ENCODE measurements at regions of chr5 and their contacts with region 1.

Region 1: GRCh38 chr5:42767491-42768105 is 11.0 kb downstream of the CCDC152 start:
- DNase-seq: peak in 3 of 4 experiments; percentile 13 to 51 (median 26)
- ATAC-seq: peak; percentile 81
- H3K4me3 ChIP-seq: no peak overlapping the region
- H3K27ac ChIP-seq: no peak overlapping the region
- H3K4me1 ChIP-seq: no peaks in the 10 kb centered on the region
- H3K27me3 ChIP-seq: no peaks in the 10 kb centered on the region
- CTCF ChIP-seq: peak; percentile 40 to 79 (median 46); a peak in 3 of 6 replicates
- EP300 ChIP-seq: no peak
- POLR2A ChIP-seq: no peak
- RAD21 ChIP-seq: peak; percentile 90 to 91

Region 2: DNA sequence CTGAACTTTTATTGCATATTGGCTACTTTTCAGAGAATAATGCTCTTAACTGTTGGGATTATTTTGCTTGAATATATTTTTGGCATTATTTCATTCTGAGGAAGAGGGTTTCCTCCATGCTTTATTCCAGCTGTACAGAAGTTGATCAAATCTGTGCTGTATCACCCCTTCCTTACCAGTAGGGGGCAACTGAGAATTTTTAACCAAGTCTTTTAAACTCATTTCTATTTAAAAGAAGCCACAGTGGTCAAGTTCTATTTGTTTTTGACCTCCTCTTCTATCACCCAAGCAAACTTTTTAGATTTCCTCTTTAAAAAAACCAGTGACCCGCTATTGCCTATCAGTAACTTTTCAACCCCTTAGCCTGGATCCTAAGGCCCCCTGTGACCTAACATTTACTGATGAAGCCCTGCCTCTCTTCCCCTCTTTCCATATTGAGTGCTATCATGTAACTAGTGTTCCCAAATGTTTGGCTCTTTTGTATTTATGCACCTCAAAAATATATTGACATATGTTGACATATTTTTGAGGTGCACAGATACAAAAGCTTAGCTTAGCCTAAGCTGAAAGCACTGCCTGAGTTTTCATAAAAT is 761.9 kb before region 1 on chr5:
- CTCF ChIA-PET with region 1: interaction called, 3 read pairs
- POLR2A ChIA-PET with region 1: no interaction called
- in situ Hi-C with region 1: no loop called
- intact Hi-C with region 1: loop called (anchors 5 kb)
- DNase-seq: peak; percentile 20 to 53 (median 47)
- ATAC-seq: peak; percentile 81
- H3K4me3 ChIP-seq: no peak overlapping the region
- H3K27ac ChIP-seq: no peak overlapping the region
- H3K4me1 ChIP-seq: no peaks in the 10 kb centered on the region
- H3K27me3 ChIP-seq: no peaks in the 10 kb centered on the region; a peak in 1 of 5 replicates
- CTCF ChIP-seq: peak; percentile 35 to 70 (median 61); a peak in 5 of 6 replicates
- EP300 ChIP-seq: no peak
- POLR2A ChIP-seq: no peak
- RAD21 ChIP-seq: peak; percentile 10 to 45; a peak in 2 of 4 replicates

Region 3: DNA sequence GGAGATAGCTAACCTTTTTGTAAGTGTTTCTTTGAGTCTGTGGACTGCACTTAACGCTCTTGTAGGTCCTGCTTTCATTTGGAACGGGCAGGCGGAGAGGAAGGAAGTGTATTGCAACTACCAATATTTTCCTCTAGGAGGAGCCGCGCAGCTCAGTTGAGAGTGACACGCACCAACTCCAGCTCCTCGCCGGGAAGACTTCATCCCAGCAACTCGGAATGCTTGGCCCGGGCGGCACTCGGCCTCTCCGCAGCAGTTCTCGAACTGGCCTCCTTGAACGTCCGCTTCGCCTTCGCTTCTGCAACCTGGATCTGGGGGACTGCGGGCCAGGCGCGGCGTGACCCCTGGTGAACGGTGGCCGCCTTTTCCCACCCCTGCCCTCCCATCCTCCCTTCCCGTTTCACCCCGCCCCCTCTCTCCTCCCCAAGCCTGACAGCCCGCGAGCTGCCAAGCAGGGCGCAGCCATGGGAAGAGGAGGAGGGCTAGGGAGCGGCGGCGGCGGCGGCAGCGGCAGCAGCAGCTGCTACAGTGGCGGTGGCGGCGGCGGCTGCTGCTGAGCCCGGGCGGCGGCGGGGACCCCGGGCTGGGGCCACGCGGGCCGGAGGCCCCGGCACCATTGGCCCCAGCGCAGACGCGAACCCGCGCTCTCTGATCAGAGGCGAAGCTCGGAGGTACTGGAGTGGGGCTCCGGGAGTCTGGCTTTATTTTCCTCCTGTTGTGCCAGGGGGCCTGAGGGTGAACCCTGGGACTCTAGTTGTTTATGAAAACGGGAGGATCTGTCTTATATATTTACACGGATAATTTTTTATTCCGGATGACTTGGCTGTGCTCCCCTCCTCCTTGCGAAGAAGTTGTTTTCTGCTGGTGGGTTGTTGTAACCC is 344.1 kb before region 1 on chr5 and contains the start of gene GHR:
- CTCF ChIA-PET with region 1: interaction called, 4 read pairs
- POLR2A ChIA-PET with region 1: no interaction called
- in situ Hi-C with region 1: no loop called
- intact Hi-C with region 1: loop called (anchors 5 kb)
- DNase-seq: peak; percentile 35 to 66 (median 42)
- ATAC-seq: peak; percentile 98
- H3K4me3 ChIP-seq: peak within 1 kb of the TSS; percentile 25; the same call in 1 of the 2 replicates
- H3K27ac ChIP-seq: no peak within 1 kb of the TSS
- H3K4me1 ChIP-seq: peaks cover 0 to 14% of the 10 kb centered on the region in 2 experiments; a peak in 2 of 5 replicates
- H3K27me3 ChIP-seq: peaks cover 0 to 7% of the 10 kb centered on the region in 2 experiments; a peak in 2 of 5 replicates
- CTCF ChIP-seq: peak; percentile 53 to 64 (median 60)
- EP300 ChIP-seq: no peak
- POLR2A ChIP-seq: no peak
- RAD21 ChIP-seq: peak; percentile 39 to 54; a peak in 3 of 4 replicates
- polyA plus RNA-seq, gene GHR: 0.01 to 0.04 TPM

Region 4: GRCh38 chr5:42514754-42515153 is 252.8 kb before region 1 on chr5:
- CTCF ChIA-PET with region 1: no interaction called
- POLR2A ChIA-PET with region 1: no interaction called
- in situ Hi-C with region 1: no loop called
- intact Hi-C with region 1: loop called (anchors 5 kb)
- DNase-seq: peak in 1 of 4 experiments; percentile 30
- ATAC-seq: peak; percentile 64
- H3K4me3 ChIP-seq: no peak overlapping the region
- H3K27ac ChIP-seq: no peak overlapping the region
- H3K4me1 ChIP-seq: no peaks in the 10 kb centered on the region
- H3K27me3 ChIP-seq: no peaks in the 10 kb centered on the region
- CTCF ChIP-seq: peak; percentile 13 to 41 (median 36); a peak in 3 of 6 replicates
- EP300 ChIP-seq: no peak
- POLR2A ChIP-seq: no peak
- RAD21 ChIP-seq: peak; percentile 31 to 54

Region 5: DNA sequence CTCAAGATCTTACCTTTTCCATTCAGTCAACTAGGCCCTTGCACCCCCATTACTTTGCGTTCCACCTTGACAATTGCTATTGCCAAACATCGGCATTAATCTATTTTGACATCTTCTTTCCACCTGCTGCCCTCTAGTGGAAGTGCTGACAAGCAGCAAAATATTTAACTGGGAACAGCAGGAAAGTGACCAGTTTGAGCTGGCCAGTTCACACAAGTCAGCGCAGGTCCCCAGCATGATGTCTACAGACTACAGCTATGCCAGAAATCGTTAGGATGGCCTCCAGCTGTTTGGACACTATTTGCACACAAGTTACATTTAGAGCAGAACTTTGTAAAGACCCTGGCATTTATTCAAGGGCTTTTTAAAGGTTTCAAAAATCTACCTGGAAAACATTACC is 184.3 kb before region 1 on chr5:
- CTCF ChIA-PET with region 1: no interaction called
- POLR2A ChIA-PET with region 1: no interaction called
- in situ Hi-C with region 1: no loop called
- intact Hi-C with region 1: loop called (anchors 5 kb)
- DNase-seq: peak; percentile 69 to 88 (median 75)
- ATAC-seq: peak; percentile 77
- H3K4me3 ChIP-seq: no peak overlapping the region
- H3K27ac ChIP-seq: no peak overlapping the region
- H3K4me1 ChIP-seq: peaks cover 16 to 32% of the 10 kb centered on the region in 2 experiments
- H3K27me3 ChIP-seq: peaks cover 0 to 7% of the 10 kb centered on the region in 2 experiments; a peak in 3 of 5 replicates
- CTCF ChIP-seq: peak; percentile 83 to 94 (median 93)
- EP300 ChIP-seq: peak; percentile 48; the same call in 1 of the 2 replicates
- POLR2A ChIP-seq: no peak
- RAD21 ChIP-seq: peak; percentile 69 to 81

Region 6: DNA sequence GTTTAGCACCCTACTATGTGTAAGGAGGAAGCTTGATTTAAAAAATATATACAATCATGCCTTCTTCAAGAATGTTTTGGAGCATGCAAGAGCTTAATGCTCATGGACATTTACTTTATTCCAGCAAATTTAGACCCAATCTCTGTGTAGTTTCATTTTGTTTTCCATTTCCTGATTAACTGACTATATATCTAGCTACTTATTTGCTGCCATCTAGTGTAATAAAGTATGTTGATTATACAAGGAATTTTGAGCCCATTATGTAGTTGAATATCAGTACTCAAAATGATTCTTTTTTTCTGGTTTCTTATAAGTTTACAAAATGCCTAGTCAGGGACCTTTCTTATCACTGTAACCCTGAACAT is 111.0 kb before region 1 on chr5:
- CTCF ChIA-PET with region 1: no interaction called
- POLR2A ChIA-PET with region 1: no interaction called
- in situ Hi-C with region 1: no loop called
- intact Hi-C with region 1: no loop called
- DNase-seq: no peak
- ATAC-seq: no peak
- H3K4me3 ChIP-seq: no peak overlapping the region
- H3K27ac ChIP-seq: no peak overlapping the region
- H3K4me1 ChIP-seq: no peaks in the 10 kb centered on the region
- H3K27me3 ChIP-seq: no peaks in the 10 kb centered on the region; a peak in 1 of 5 replicates
- CTCF ChIP-seq: peak in 2 of 3 experiments; percentile 7 to 42; a peak in 3 of 6 replicates
- EP300 ChIP-seq: no peak
- POLR2A ChIP-seq: no peak
- RAD21 ChIP-seq: peak; percentile 36 to 57